Endothelial cell of umbilical vein (primary cell): ENCODE measurements at regions of chr2 and their contacts with region 1.

Region 1: DNA sequence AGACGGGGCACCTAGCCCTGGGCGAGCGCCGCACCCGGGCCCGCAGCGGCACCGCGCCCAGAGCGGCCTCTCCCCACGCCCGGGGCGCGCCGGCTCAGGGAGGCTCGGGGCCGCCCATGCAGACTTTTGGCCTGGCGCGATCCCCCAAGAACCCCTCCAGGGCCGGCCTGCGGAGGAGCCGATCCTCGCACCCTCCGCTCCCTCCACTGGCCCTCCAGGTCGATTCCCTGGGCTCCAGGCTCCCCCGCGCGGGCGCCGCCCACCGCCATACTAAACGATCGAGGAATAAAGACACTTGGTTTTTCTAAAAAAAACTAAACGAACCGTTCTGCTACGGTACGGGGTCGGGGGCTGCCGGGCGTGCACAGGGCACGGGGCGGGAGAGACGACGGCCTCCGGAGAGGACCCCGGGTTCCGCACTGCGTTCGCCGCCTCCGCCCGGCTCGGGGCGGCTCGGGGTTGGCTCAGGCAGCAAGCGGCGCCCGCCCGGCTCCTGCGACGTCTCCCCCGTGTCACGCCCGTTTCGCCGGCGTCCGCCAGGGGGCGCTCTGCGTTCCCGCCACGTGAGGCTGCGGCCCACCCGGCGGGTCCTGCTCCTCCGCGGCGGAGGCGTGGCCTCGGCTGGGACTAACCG is 365 bp upstream of the KHK start:
- DNase-seq: peak; percentile 94
- H3K4me3 ChIP-seq: peak overlapping the region; percentile 55 to 73 (median 64)
- H3K27ac ChIP-seq: peak overlapping the region; percentile 51
- H3K4me1 ChIP-seq: peaks cover 12% of the 10 kb centered on the region
- H3K27me3 ChIP-seq: no peaks in the 10 kb centered on the region
- CTCF ChIP-seq: peak; percentile 76 to 86
- POLR2A ChIP-seq: peak; percentile 62

Region 2: DNA sequence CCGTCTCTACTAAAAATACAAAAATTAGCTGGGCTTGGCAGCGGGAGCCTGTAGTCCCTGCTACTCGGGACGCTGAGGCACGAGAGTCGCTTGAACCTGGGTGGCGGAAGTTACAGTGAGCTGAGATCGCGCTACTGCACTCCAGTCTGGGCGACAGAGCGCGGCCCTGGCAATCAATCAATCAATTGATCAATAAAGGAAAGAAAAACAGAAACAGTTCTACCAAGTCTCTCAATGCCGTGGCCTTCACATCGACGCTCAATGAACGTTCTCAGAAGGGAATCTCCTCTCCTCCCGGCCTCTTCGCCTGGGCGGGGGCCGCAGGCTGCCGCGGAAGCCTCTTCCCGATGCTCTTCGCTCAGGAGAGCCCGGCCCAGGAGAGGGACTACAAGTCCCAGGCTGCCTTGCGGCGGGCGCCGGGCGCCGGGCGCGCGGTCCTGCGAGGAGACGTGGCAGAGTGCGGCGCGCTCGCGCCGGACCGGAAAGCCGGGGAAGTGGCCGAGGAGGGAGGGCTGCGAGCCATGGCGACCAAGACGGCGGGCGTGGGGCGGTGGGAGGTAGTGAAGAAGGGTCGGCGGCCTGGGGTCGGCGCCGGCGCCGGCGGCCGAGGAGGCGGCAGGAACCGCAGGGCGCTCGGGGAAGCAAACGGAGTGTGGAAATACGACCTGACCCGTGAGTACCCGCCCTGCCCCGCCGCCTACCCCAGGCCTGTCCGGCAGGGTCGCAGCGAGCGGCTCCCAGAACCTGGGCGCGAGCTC is 53.5 kb before region 1 on chr2 and contains the start of gene TMEM214:
- CTCF ChIA-PET with region 1: interaction called, 3 read pairs
- POLR2A ChIA-PET with region 1: no interaction called
- dilution Hi-C with region 1: no loop called
- intact Hi-C with region 1: loop called (anchors 1 kb)
- DNase-seq: peak; percentile 87
- H3K4me3 ChIP-seq: peak within 1 kb of the TSS; percentile 76 to 91 (median 79)
- H3K27ac ChIP-seq: peak within 1 kb of the TSS; percentile 58
- H3K4me1 ChIP-seq: peaks cover 13% of the 10 kb centered on the region
- H3K27me3 ChIP-seq: no peaks in the 10 kb centered on the region
- CTCF ChIP-seq: no peak
- POLR2A ChIP-seq: peak; percentile 80
- total RNA-seq, gene TMEM214: 107 and 109 TPM in 2 replicates

Region 3: DNA sequence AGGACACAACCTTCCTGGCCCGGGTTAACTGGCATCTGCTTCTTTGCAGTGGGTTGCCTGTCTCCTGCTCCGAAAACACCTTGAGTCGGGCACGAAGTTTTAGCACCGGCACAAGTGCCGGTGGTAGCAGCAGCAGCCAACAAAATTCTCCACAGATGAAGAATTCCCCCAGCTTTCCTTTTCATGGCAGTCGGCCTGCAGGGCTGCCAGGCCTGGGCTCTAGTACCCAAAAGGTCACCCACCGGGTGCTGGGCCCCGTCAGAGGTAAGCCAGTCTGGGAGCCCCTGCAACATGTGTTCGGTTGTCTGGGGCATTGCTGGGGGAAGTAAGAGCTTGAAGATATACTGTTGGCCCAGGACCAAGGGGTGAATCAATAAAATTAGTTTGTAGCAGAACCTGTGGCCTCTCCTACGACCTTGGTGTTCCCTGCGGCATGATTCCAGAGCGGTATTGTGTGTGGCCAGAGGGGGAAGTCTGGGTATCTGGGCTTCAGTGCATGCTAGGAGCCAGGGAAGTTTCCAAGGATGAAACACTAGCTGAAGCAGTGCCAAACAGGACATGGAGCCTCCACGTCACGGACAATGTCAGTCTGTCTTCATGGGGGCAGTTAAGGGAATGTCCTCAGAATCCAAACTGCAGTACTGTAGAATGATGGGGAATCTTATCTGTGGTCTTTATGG is 26.9 kb before region 1 on chr2:
- CTCF ChIA-PET with region 1: interaction called, 11 read pairs
- POLR2A ChIA-PET with region 1: interaction called, 3 read pairs
- dilution Hi-C with region 1: no loop called
- intact Hi-C with region 1: no loop called
- DNase-seq: peak; percentile 84
- H3K4me3 ChIP-seq: no peak overlapping the region
- H3K27ac ChIP-seq: no peak overlapping the region
- H3K4me1 ChIP-seq: peaks cover 19% of the 10 kb centered on the region
- H3K27me3 ChIP-seq: no peaks in the 10 kb centered on the region
- CTCF ChIP-seq: no peak
- POLR2A ChIP-seq: peak; percentile 25

Region 4: GRCh38 chr2:27133905-27134780 is 47.9 kb after region 1 on chr2 and contains the start of gene PREB:
- CTCF ChIA-PET with region 1: interaction called, 5 read pairs
- POLR2A ChIA-PET with region 1: no interaction called
- dilution Hi-C with region 1: no loop called
- intact Hi-C with region 1: loop called (anchors 1 kb)
- DNase-seq: peak; percentile 97
- H3K4me3 ChIP-seq: peak within 1 kb of the TSS; percentile 78 to 97 (median 84)
- H3K27ac ChIP-seq: peak within 1 kb of the TSS; percentile 72
- H3K4me1 ChIP-seq: peaks cover 10% of the 10 kb centered on the region
- H3K27me3 ChIP-seq: no peaks in the 10 kb centered on the region
- CTCF ChIP-seq: peak; percentile 13 to 48
- POLR2A ChIP-seq: peak; percentile 90
- total RNA-seq, gene PREB: 45.6 and 47.2 TPM in 2 replicates

Region 5: GRCh38 chr2:27211829-27212627 is 125.8 kb after region 1 on chr2 and contains the starts of genes ATRAID and SLC5A6:
- CTCF ChIA-PET with region 1: no interaction called
- POLR2A ChIA-PET with region 1: no interaction called
- dilution Hi-C with region 1: no loop called
- intact Hi-C with region 1: loop called (anchors 1 kb)
- DNase-seq: peak; percentile 92
- H3K4me3 ChIP-seq: peak within 1 kb of the TSS; percentile 68 to 91 (median 88)
- H3K27ac ChIP-seq: peak within 1 kb of the TSS; percentile 89
- H3K4me1 ChIP-seq: peaks cover 17% of the 10 kb centered on the region
- H3K27me3 ChIP-seq: no peaks in the 10 kb centered on the region
- CTCF ChIP-seq: no peak
- POLR2A ChIP-seq: peak; percentile 98
- total RNA-seq, gene ATRAID: 84.3 and 86.6 TPM in 2 replicates
- total RNA-seq, gene SLC5A6: 42.7 and 52.0 TPM in 2 replicates